Activated naive CD4-positive, alpha-beta T cell treated with anti-CD3 and anti-CD28 coated beads, Interleukin-2, amount 10 ng/mL, durations not matched to agents 7 days and 5 days (primary cell): ENCODE measurements at regions of chr1 and their contacts with region 1.

Region 1: DNA sequence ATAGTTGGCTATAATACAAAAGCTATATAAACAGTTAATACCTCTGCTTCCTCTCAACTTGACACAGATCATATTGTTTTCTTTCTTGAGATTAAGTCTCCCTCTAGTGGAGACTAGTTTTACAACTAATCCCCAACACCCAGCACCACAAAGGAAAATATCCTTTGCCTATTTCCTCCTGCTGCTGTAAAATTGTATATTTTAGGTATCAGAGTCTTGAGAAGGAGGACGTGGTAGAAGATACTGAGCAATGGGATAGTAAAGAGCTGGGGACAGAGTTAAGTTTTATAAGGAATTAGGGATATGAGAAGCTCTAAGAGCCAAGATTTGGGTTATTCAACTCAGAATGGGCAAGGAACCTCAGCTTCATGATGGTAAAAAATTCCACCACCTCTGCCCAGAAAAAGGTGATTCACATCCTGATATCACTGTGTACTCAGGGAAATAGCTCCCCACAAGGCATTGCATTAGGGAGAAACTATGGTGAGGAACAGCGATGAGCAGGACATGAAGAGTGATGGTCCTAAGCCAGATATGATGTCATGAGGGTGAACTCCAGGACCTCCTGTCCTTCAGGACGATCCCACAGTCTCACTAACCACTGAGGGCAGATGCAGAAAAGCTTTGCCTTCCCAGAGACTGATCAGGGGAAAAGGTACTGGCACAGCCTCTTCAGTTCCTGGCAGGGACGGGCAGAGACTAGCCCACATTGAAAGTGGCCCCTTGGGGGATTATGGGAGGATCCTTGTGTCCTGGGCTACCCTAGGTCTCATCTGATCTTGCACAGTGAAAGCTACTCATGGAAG is 14.7 kb upstream of the CFAP126 start:
- DNase-seq: no peak
- H3K4me3 Mint-ChIP-seq: no peak overlapping the region
- H3K27ac Mint-ChIP-seq: no peak overlapping the region
- H3K4me1 Mint-ChIP-seq: peaks cover 17% of the 10 kb centered on the region
- H3K27me3 Mint-ChIP-seq: no peaks in the 10 kb centered on the region

Region 2: DNA sequence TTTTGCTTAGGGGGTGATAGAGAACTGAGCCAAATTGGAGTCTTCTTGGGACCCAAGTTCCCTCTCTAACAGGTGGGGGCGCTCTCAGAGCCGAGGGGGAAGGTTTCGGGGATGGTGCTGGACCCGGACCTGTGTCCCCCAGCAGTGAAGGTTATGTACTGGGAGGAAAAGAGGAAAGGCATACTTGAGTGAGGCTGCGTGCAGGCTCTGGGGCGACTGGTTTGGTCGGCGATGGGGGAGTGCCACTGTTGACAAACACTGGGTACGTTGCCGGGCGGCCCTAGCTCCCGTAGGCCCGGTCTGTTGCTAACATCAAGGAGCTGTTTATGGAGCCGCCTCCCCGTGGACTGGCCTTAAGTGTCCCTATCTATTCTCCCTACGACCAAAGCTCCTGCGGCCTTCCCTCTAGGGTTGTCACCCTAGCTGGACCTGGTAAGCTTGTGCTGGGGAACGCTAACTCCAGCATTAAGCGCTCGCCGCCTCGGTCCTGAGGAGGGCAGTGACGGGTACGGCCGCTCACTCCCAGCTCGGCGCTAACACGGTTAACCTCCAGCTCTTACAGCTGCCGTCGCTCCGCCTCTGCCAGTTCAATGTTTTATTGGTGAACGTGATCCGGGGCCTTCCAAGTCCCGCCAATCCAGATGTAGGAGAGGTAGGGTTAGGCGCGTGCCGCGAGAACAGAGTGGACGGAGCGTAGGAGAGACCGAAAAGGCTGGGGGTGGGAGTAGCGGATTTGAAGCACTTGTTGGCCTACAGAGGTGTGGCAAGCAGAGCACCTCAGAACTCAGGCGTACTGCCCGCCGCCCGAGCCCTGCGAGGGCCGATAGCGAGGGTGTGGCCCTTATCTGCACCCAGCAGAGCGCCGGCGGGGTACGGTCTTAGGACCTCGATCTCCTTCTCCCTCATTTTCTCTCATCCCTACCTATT is 216.4 kb before region 1 on chr1 and contains the start of gene PPOX:
- CTCF ChIA-PET with region 1: interaction called, 28 read pairs
- DNase-seq: peak; percentile 97
- H3K4me3 Mint-ChIP-seq: peak within 1 kb of the TSS; percentile 74
- H3K27ac Mint-ChIP-seq: peak within 1 kb of the TSS; percentile 97
- H3K4me1 Mint-ChIP-seq: peaks cover 45% of the 10 kb centered on the region
- H3K27me3 Mint-ChIP-seq: no peaks in the 10 kb centered on the region

Region 3: GRCh38 chr1:161192476-161193465 is 189.6 kb before region 1 on chr1:
- CTCF ChIA-PET with region 1: interaction called, 16 read pairs
- DNase-seq: peak; percentile 78
- H3K4me3 Mint-ChIP-seq: no peak overlapping the region
- H3K27ac Mint-ChIP-seq: peak overlapping the region; percentile 86
- H3K4me1 Mint-ChIP-seq: peaks cover 62% of the 10 kb centered on the region
- H3K27me3 Mint-ChIP-seq: no peaks in the 10 kb centered on the region

Region 4: GRCh38 chr1:161209790-161210409 is 172.5 kb before region 1 on chr1:
- CTCF ChIA-PET with region 1: interaction called, 33 read pairs
- DNase-seq: peak; percentile 83
- H3K4me3 Mint-ChIP-seq: no peak overlapping the region
- H3K27ac Mint-ChIP-seq: peak overlapping the region; percentile 82
- H3K4me1 Mint-ChIP-seq: peaks cover 47% of the 10 kb centered on the region
- H3K27me3 Mint-ChIP-seq: no peaks in the 10 kb centered on the region

Region 5: GRCh38 chr1:161292631-161293030 is 89.8 kb before region 1 on chr1:
- CTCF ChIA-PET with region 1: interaction called, 12 read pairs
- DNase-seq: no peak
- H3K4me3 Mint-ChIP-seq: no peak overlapping the region
- H3K27ac Mint-ChIP-seq: no peak overlapping the region
- H3K4me1 Mint-ChIP-seq: no peaks in the 10 kb centered on the region
- H3K27me3 Mint-ChIP-seq: peaks cover 4% of the 10 kb centered on the region

Region 6: DNA sequence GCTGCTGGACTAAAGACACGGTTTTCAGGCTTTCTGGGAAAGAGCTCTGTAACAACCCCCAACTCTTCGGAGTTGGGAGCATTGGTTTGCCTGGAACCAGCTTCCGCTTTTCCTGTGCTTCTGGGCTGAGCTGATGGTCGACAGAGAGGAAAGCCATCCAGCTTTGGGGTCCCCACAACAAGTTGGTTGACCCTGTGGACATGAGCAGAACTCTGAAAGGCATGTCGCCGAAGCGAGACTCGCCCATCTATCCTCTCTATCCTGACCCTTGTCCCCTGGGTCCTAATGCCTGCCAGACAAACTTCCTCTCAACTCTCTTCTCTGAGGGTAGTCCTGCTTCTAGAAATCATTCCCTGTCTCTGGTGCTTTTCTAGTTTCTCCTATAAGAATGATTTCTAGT is 90.9 kb after region 1 on chr1:
- CTCF ChIA-PET with region 1: no interaction called
- DNase-seq: no peak
- H3K4me3 Mint-ChIP-seq: no peak overlapping the region
- H3K27ac Mint-ChIP-seq: no peak overlapping the region
- H3K4me1 Mint-ChIP-seq: peaks cover 5% of the 10 kb centered on the region
- H3K27me3 Mint-ChIP-seq: peaks cover 42% of the 10 kb centered on the region

Region 7: GRCh38 chr1:161486806-161487741 is 104.7 kb after region 1 on chr1:
- CTCF ChIA-PET with region 1: no interaction called
- DNase-seq: peak; percentile 47
- H3K4me3 Mint-ChIP-seq: no peak overlapping the region
- H3K27ac Mint-ChIP-seq: no peak overlapping the region
- H3K4me1 Mint-ChIP-seq: peaks cover 15% of the 10 kb centered on the region
- H3K27me3 Mint-ChIP-seq: peaks cover 34% of the 10 kb centered on the region